ENCODE measurements at regions of chr6 and their contacts with region 1.

Region 1: DNA sequence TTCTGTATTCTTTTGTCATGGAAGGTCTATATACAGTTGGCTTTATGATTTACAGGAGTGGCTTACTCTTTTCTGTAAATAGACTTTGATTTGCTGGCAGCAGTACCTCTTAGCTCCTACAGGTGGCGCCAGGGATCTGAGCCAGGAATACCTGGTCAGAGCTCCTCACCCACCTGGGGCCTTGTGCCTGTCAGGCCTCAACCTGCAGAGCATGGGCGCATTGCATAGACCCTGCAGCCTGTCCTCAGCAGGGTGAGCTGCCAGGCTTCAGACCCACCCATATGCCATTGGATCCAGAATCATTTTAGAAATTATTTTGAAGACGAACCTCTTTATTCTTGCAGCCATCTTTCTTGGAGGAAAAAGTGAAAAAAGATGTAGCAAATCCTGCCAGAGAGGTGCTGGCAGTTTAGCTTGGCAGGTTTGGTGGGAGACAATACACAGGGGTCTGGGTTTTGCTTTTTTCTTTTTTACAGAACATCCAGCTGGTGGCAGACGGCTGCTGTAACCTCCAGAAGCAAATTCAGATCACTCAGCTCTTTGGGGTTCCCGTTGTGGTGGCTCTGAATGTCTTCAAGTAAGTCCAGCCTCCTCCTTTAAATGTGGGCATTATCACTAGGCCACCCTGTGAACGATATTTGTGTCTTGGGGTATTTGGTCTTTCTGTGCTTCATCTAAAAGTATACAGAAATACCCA is 149.1 kb downstream of the MTHFD1L start:
- DNase-seq: peak; percentile 36 to 71 (median 42)
- H3K4me3 ChIP-seq: no peak overlapping the region
- H3K4me3 Mint-ChIP-seq: peak overlapping the region in 6 of 7 donors; percentile 46 to 76 (median 66)
- H3K27ac ChIP-seq: no peak overlapping the region
- H3K27ac Mint-ChIP-seq: peak overlapping the region in 3 of 8 donors; percentile 30 to 83 (median 69)
- H3K4me1 ChIP-seq: no peaks in the 10 kb centered on the region
- H3K4me1 Mint-ChIP-seq: peaks cover 4 to 14% (median 13%) of the 10 kb centered on the region in 3 donors
- H3K27me3 ChIP-seq: no peaks in the 10 kb centered on the region
- H3K27me3 Mint-ChIP-seq: no peaks in the 10 kb centered on the region

Region 2: DNA sequence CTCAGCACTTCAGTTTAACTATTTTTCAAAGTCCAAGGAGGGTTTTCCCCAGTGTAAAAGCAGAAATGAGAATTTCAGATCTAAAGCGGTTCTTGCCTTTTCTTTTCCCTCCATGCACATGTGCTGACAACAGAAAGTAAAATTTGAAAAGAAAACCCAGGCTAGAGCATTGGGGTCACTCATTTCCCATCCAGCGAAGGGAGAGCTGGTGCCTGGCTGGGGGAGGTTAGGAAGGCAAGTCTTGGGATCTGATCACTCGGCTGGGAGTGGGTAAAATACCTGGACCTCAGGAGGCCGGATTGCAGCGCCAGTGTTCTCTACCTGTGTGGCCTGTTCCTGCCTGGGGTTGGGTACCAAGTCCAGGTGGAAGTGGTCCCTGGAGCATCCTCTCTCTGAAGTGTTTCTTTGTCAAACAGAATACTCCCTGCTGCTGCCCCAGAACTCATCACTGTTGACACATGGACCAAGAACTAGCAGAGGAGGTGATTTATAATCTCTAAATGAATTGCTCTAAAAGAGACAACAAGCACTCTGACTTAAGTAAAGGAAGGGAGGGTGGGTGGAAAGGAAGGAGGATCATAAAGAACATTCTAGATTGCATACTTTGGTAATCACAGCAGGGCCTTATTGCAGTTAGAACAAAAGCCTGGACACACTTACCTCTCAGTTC is 13.0 kb before region 1 on chr6:
- CTCF ChIA-PET with region 1: interaction called, 18 read pairs
- POLR2A ChIA-PET with region 1: no interaction called
- DNase-seq: no peak
- H3K4me3 ChIP-seq: no peak overlapping the region
- H3K4me3 Mint-ChIP-seq: no peak overlapping the region
- H3K27ac ChIP-seq: no peak overlapping the region
- H3K27ac Mint-ChIP-seq: no peak overlapping the region
- H3K4me1 ChIP-seq: no peaks in the 10 kb centered on the region
- H3K4me1 Mint-ChIP-seq: peaks cover 6 to 24% (median 15%) of the 10 kb centered on the region in 3 donors
- H3K27me3 ChIP-seq: no peaks in the 10 kb centered on the region
- H3K27me3 Mint-ChIP-seq: no peaks in the 10 kb centered on the region

Region 3: DNA sequence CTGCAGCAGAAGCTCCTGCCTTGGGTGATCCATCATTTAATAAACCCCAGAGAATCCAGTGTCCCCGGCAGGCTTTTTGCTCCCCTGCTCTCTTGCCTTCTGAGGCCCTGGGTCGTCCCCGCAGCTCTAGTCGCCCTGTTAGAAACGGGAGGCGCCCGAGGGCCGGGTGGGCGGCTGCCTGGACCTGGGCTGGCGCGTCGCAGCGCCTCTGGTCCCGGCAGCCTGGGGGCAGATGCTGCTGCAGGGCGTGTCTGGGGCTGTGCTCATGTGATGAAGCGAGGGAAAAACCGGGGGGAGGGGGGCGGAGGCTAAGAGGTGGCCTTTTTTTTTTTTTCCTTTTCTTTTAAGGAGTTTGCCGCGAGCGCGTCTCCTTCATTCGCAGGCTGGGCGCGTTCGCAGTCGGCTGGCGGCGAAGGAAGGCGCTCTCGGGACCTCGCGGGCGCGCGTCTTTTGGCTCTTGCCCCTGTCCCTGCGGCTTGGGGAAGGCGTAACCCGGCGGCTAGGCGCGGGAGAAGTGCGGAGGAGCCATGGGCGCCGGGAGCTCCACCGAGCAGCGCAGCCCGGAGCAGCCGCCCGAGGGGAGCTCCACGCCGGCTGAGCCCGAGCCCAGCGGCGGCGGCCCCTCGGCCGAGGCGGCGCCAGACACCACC is 225.6 kb after region 1 on chr6:
- CTCF ChIA-PET with region 1: no interaction called
- POLR2A ChIA-PET with region 1: no interaction called
- DNase-seq: no peak
- H3K4me3 ChIP-seq: no peak overlapping the region
- H3K4me3 Mint-ChIP-seq: peak overlapping the region in 4 of 7 donors; percentile 19 to 67 (median 56)
- H3K27ac ChIP-seq: no peak overlapping the region
- H3K27ac Mint-ChIP-seq: no peak overlapping the region
- H3K4me1 ChIP-seq: no peaks in the 10 kb centered on the region
- H3K4me1 Mint-ChIP-seq: peaks cover 4 to 19% (median 9%) of the 10 kb centered on the region in 3 donors
- H3K27me3 ChIP-seq: peaks cover 15% of the 10 kb centered on the region
- H3K27me3 Mint-ChIP-seq: peaks cover 44 to 74% of the 10 kb centered on the region in 2 donors

Region 4: DNA sequence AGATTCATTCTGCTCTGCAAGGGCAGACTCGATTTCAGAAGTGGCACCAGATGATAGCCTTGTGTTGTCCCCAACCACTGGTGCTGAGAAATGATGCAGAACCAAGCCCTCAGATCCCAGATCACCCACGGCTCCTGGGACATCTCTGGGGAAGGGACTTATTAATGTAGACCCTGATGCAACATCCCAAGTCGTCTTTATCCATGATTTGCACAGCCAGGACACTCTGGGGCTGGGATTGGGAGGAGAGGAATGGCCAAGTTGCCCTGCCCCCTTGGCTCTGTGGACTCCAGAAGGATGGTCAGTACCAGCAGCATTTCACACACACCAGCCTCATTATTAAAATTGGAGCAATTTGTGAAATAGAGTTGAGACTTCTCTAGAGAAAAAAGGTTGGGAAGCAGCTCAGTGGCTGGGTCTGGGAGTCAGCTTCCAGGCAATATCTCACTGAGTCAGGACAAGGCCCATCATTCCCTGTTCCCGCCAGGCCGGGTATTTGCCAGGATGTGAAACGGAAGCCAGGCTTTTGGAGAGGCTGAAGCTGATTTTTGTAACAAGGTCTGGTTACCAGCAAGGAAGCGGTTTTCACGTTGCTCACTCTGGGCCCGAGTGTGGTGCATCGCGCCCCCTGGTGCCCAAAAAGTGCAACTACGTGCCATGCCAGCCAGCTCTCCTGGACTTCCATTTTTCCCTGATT is 309.4 kb after region 1 on chr6:
- CTCF ChIA-PET with region 1: interaction called, 113 read pairs
- POLR2A ChIA-PET with region 1: interaction called, 3 read pairs
- DNase-seq: peak; percentile 59 to 76 (median 62)
- H3K4me3 ChIP-seq: no peak overlapping the region
- H3K4me3 Mint-ChIP-seq: peak overlapping the region; percentile 45 to 72 (median 62)
- H3K27ac ChIP-seq: no peak overlapping the region
- H3K27ac Mint-ChIP-seq: peak overlapping the region in 1 of 8 donors; percentile 57
- H3K4me1 ChIP-seq: peaks cover 10% of the 10 kb centered on the region
- H3K4me1 Mint-ChIP-seq: peaks cover 20 to 27% (median 24%) of the 10 kb centered on the region in 3 donors
- H3K27me3 ChIP-seq: peaks cover 20% of the 10 kb centered on the region
- H3K27me3 Mint-ChIP-seq: peaks cover 43 to 69% of the 10 kb centered on the region in 2 donors

Region 5: GRCh38 chr6:151335930-151336329 is 321.4 kb after region 1 on chr6:
- CTCF ChIA-PET with region 1: interaction called, 28 read pairs
- POLR2A ChIA-PET with region 1: interaction called, 5 read pairs
- DNase-seq: no peak
- H3K4me3 ChIP-seq: no peak overlapping the region
- H3K4me3 Mint-ChIP-seq: no peak overlapping the region
- H3K27ac ChIP-seq: no peak overlapping the region
- H3K27ac Mint-ChIP-seq: no peak overlapping the region
- H3K4me1 ChIP-seq: no peaks in the 10 kb centered on the region
- H3K4me1 Mint-ChIP-seq: peaks cover 3 to 5% (median 5%) of the 10 kb centered on the region in 3 donors
- H3K27me3 ChIP-seq: no peaks in the 10 kb centered on the region
- H3K27me3 Mint-ChIP-seq: peaks cover 0 to 9% of the 10 kb centered on the region in 2 donors

Measured in CD8-positive, alpha-beta memory T cell (primary cell).